ENCODE measurements at regions of chr2 and their contacts with region 1.

Region 1: DNA sequence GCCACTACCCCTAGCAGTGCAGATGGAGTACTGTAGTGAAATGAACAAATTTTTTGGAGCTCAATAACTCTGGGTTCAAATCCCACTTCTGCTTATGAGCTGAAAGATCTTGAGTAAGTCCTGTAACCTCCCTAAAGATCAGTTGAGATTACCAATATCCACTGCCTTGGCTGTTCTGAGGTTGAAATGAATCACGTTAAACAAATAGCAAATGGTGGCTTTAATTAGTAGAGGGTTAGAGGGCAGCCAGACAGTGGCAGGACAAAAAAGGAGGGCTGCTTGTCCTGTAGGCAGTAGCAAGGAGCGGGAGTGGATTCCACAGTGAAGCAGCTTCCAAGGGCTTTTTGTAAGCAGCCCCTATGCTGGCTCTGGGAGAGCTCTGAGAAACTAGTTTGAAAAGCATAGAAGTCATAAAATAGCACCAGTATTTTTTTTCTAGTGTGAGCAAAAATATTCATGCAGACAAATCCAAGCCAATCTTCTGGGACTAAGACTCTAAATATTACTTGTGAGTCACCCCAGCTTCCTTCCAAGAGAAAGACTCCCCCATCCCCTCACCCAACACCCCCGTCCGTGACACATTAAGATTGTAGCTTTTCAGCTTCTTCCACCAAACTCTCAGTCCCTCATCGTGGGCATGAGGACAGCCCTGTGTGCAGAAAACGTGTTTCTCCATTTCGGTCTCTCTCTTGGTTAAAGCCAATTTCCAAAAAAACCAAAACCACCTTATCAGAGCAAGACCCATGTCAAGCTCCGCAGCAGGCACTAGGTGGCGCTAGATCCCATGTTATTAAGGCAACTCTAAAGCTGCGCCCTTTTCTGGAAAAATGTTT is 123.5 kb upstream of the LGALSL start:
- DNase-seq: no peak
- ATAC-seq: peak; percentile 22
- H3K4me3 ChIP-seq: no peak overlapping the region
- H3K27ac ChIP-seq: no peak overlapping the region
- H3K4me1 ChIP-seq: peaks cover 41% of the 10 kb centered on the region
- H3K27me3 ChIP-seq: no peaks in the 10 kb centered on the region
- CTCF ChIP-seq: peak; percentile 82 to 92 (median 91)
- EP300 ChIP-seq: no peak
- POLR2A ChIP-seq: no peak
- RAD21 ChIP-seq: peak; percentile 97

Region 2: DNA sequence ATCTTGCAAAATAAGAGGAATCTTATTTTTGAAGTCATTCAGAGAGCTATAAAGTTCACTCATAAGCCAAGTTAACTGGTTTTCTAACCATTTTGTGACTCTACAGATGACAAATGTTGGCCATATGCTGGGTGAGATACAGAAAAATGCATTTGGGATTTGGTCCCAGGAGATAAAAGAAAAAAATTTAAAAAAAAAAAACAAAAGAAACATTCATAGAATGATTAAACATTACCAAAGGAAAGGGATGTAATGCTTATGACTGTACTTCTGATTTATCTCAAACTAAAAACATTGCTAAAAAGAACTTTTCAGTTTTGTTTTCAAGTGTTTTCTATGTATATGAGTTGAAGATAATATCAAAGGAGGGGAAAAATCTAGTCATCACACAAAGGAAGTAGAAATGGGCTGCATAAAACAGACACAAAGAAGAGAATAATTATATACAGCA is 229.3 kb before region 1 on chr2:
- CTCF ChIA-PET with region 1: interaction called, 19 read pairs
- POLR2A ChIA-PET with region 1: interaction called, 4 read pairs
- RAD21 ChIA-PET with region 1: interaction called, 101 read pairs
- SMC1A ChIA-PET with region 1: interaction called, 104 read pairs
- in situ Hi-C with region 1: no loop called
- intact Hi-C with region 1: loop called (anchors 2 kb)
- DNase-seq: no peak
- ATAC-seq: peak; percentile 68
- H3K4me3 ChIP-seq: peak overlapping the region; percentile 26; the same call in 1 of the 2 replicates
- H3K27ac ChIP-seq: peak overlapping the region; percentile 80
- H3K4me1 ChIP-seq: peaks cover 46% of the 10 kb centered on the region
- H3K27me3 ChIP-seq: no peaks in the 10 kb centered on the region
- CTCF ChIP-seq: no peak
- EP300 ChIP-seq: no peak
- POLR2A ChIP-seq: no peak
- RAD21 ChIP-seq: no peak

Region 3: DNA sequence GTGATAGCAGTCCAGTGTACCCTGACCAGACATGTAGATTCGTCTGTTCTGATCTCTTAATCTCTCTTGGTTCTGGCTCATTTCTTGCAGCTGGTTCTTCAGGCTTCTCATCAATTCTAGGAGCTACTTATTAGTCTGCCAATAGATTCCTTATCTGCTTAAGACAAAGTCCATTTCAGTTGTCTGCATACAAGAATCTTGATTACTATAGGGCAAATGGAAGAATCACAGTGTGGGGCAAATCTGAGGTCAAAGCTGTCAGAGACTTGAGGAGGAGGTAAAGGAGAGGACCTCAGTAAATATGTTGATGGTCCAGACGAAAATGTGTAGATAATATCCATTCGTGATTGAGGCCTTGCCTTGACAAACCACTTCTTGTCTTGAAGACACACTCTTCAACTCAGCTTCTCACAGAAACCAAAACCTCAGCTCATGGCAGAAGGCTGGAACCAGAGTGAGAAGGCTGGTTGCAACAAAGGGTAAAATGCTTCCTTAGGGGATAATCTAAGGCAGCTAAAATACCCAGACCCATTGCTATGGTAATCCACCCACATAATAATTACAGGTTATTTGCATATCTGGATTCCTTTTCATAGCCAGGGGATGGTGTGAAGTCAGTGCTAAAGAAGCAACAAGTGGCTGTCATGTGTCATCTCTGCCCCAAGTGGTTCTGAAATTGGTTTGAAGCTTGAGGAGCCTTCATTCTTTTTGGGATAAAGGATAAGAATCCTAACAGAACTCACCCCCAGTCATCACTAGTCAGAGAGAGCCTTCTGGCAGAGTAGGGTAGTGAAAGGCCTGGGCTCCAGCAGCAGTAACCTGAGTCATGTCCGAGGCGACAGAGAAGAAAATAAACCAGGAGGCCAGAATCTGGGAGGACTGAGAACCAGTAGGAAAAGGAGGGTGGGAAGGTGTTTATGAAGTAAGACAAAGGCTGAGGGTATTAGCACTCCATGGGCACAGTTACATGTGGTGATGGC is 157.1 kb before region 1 on chr2:
- CTCF ChIA-PET with region 1: interaction called, 6 read pairs
- POLR2A ChIA-PET with region 1: no interaction called
- RAD21 ChIA-PET with region 1: interaction called, 10 read pairs
- SMC1A ChIA-PET with region 1: interaction called, 11 read pairs
- in situ Hi-C with region 1: no loop called
- intact Hi-C with region 1: no loop called
- DNase-seq: no peak
- ATAC-seq: peak; percentile 64
- H3K4me3 ChIP-seq: no peak overlapping the region
- H3K27ac ChIP-seq: no peak overlapping the region
- H3K4me1 ChIP-seq: peaks cover 7% of the 10 kb centered on the region; the same call in 1 of the 2 replicates
- H3K27me3 ChIP-seq: no peaks in the 10 kb centered on the region
- CTCF ChIP-seq: no peak
- EP300 ChIP-seq: no peak
- POLR2A ChIP-seq: no peak
- RAD21 ChIP-seq: no peak

Region 4: DNA sequence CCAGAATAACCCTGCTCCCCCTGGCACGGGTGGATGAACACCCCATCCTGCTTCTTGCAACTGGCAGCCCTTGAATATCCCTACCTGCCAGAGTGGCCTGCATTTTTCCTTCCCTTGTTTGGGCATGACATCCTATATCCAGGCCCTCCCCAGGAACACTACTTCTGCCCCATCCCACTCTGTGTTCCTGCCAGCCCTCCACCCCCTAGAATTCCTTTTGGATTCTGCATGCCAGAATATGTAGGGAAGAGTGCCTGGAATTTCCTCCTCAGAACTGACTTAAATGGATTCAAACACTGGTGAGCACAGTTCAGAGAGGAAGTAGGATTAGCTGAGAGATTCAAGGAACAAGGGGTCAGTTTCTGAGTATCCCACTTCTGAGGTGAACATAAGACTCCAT is 62.8 kb before region 1 on chr2:
- CTCF ChIA-PET with region 1: interaction called, 8 read pairs
- POLR2A ChIA-PET with region 1: no interaction called
- RAD21 ChIA-PET with region 1: interaction called, 5 read pairs
- SMC1A ChIA-PET with region 1: interaction called, 12 read pairs
- in situ Hi-C with region 1: no loop called
- intact Hi-C with region 1: loop called (anchors 5 kb)
- DNase-seq: no peak
- ATAC-seq: no peak
- H3K4me3 ChIP-seq: no peak overlapping the region
- H3K27ac ChIP-seq: no peak overlapping the region
- H3K4me1 ChIP-seq: no peaks in the 10 kb centered on the region
- H3K27me3 ChIP-seq: no peaks in the 10 kb centered on the region
- CTCF ChIP-seq: no peak
- EP300 ChIP-seq: no peak
- POLR2A ChIP-seq: no peak
- RAD21 ChIP-seq: no peak

Region 5: GRCh38 chr2:64454386-64455332 is 124.2 kb after region 1 on chr2:
- CTCF ChIA-PET with region 1: interaction called, 37 read pairs
- POLR2A ChIA-PET with region 1: no interaction called
- RAD21 ChIA-PET with region 1: interaction called, 7 read pairs
- SMC1A ChIA-PET with region 1: interaction called, 7 read pairs
- in situ Hi-C with region 1: no loop called
- intact Hi-C with region 1: no loop called
- DNase-seq: no peak
- ATAC-seq: peak; percentile 66
- H3K4me3 ChIP-seq: peak overlapping the region; percentile 83
- H3K27ac ChIP-seq: peak overlapping the region; percentile 22; the same call in 1 of the 2 replicates
- H3K4me1 ChIP-seq: no peaks in the 10 kb centered on the region; the same call in 1 of the 2 replicates
- H3K27me3 ChIP-seq: no peaks in the 10 kb centered on the region
- CTCF ChIP-seq: no peak
- EP300 ChIP-seq: no peak
- POLR2A ChIP-seq: peak; percentile 60
- RAD21 ChIP-seq: no peak

Region 6: GRCh38 chr2:64562148-64562784 is 231.8 kb after region 1 on chr2:
- CTCF ChIA-PET with region 1: interaction called, 20 read pairs
- POLR2A ChIA-PET with region 1: interaction called, 8 read pairs
- RAD21 ChIA-PET with region 1: interaction called, 7 read pairs
- SMC1A ChIA-PET with region 1: interaction called, 48 read pairs
- in situ Hi-C with region 1: loop called (anchors 5 kb)
- intact Hi-C with region 1: loop called (anchors 2 kb)
- DNase-seq: no peak
- ATAC-seq: peak; percentile 70
- H3K4me3 ChIP-seq: no peak overlapping the region
- H3K27ac ChIP-seq: no peak overlapping the region
- H3K4me1 ChIP-seq: peaks cover 19% of the 10 kb centered on the region
- H3K27me3 ChIP-seq: no peaks in the 10 kb centered on the region
- CTCF ChIP-seq: peak; percentile 15 to 52 (median 39); a peak in 5 of 6 replicates
- EP300 ChIP-seq: no peak
- POLR2A ChIP-seq: no peak
- RAD21 ChIP-seq: peak; percentile 58

Region 7: GRCh38 chr2:64873472-64873924 is 543.0 kb after region 1 on chr2:
- CTCF ChIA-PET with region 1: interaction called, 22 read pairs
- POLR2A ChIA-PET with region 1: no interaction called
- RAD21 ChIA-PET with region 1: interaction called, 7 read pairs
- SMC1A ChIA-PET with region 1: interaction called, 4 read pairs
- in situ Hi-C with region 1: no loop called
- intact Hi-C with region 1: no loop called
- DNase-seq: no peak
- ATAC-seq: peak; percentile 98
- H3K4me3 ChIP-seq: peak overlapping the region; percentile 23; the same call in 1 of the 2 replicates
- H3K27ac ChIP-seq: no peak overlapping the region
- H3K4me1 ChIP-seq: peaks cover 9% of the 10 kb centered on the region
- H3K27me3 ChIP-seq: no peaks in the 10 kb centered on the region
- CTCF ChIP-seq: peak; percentile 94 to 99 (median 98)
- EP300 ChIP-seq: no peak
- POLR2A ChIP-seq: no peak
- RAD21 ChIP-seq: peak; percentile 89

Region 8: GRCh38 chr2:65136253-65136652 is 805.8 kb after region 1 on chr2:
- CTCF ChIA-PET with region 1: no interaction called
- POLR2A ChIA-PET with region 1: no interaction called
- RAD21 ChIA-PET with region 1: no interaction called
- SMC1A ChIA-PET with region 1: no interaction called
- in situ Hi-C with region 1: no loop called
- intact Hi-C with region 1: no loop called
- DNase-seq: no peak
- ATAC-seq: no peak
- H3K4me3 ChIP-seq: no peak overlapping the region
- H3K27ac ChIP-seq: no peak overlapping the region
- H3K4me1 ChIP-seq: no peaks in the 10 kb centered on the region
- H3K27me3 ChIP-seq: no peaks in the 10 kb centered on the region
- CTCF ChIP-seq: no peak
- EP300 ChIP-seq: no peak
- POLR2A ChIP-seq: no peak
- RAD21 ChIP-seq: no peak

Measured in GM12878 (cell line).